ENCODE measurements at regions of chr10 and their contacts with region 1.

Region 1: DNA sequence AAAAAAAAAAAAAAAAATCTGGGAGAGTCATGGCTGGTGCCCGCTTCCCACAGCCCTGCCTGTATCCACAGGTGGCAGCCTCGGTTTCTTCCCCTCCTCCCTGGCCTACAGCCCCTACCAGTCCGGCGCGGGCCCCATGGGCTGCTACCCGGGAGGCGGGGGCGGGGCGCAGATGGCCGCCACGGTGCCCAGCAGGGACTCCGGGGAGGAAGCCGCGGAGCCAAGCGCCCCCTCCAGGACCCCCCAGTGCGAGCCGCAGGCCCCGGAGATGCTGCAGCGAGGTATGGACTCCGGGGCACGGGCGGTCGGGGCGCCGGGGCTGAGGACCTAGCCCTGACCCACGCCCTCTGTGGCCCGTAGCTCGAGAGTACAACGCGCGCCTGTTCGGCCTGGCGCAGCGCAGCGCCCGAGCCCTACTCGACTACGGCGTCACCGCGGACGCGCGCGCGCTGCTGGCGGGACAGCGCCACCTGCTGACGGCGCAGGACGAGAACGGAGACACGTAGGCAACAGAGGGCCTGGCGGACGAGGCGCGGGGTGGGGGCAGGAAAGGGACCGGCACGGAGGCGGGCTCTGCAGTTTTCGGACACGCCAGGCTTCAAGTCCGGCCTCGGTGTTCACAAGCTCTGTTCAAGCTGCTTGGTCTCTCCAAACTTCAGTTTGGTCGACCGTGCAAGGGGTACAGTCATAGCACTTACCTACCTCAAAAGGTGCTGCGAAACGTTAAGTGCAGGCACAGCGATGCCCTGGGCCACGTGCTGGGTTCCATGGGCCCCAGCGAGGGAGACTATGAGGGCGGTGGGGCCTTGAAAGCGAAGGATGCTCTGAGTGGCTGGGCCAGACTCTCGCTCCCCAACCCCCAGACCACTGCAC is 3.9 kb downstream of the NFKB2 start:
- DNase-seq: no peak
- H3K4me3 ChIP-seq: peak overlapping the region; percentile 59
- CTCF ChIP-seq: peak; percentile 97

Region 2: GRCh38 chr10:102175415-102175814 is 224.0 kb before region 1 on chr10:
- CTCF ChIA-PET with region 1: interaction called, 92 read pairs
- POLR2A ChIA-PET with region 1: no interaction called
- DNase-seq: peak; percentile 47
- H3K4me3 ChIP-seq: no peak overlapping the region
- CTCF ChIP-seq: no peak

Region 3: DNA sequence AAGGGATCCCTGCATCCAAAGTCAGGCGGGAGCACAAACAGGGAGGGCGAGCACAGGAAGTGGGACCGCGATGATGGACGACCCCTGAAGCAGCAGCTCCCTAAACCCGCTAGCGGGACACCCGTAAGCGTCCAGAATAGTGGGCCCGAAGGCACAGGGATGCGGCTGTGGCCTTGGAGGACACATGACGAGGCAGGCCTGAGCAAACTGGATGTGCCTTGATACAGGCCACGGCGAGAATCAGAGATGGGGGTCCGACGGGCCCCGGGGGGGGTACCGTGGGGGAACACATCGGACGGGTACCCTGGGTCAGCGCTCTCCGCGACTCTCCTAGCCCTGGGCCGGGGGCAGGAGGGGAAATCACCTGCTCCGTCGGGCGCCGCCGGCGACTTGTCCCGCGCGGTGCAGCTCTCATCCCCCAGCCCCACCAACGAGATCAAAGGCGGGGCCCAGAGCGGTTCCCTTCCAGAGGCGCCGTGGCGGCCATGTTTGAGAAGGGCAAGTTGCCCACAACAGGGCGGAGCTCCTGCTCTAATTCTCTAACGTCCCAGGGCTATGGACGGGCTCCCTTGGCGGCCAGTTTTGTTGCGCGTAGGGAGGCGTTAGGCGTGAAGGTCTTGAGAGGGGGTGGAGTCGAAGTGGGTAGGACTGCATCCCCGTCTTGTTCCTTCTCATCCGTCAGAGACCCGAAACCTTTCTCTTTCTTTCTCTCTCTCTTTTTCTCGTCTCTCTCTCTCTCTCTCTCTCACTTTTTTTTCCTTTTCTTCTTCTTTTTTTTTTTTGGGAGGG is 32.9 kb after region 1 on chr10 and contains the start of gene CUEDC2:
- CTCF ChIA-PET with region 1: interaction called, 157 read pairs
- POLR2A ChIA-PET with region 1: interaction called, 4 read pairs
- DNase-seq: peak; percentile 61
- H3K4me3 ChIP-seq: peak within 1 kb of the TSS; percentile 90
- CTCF ChIP-seq: no peak

Region 4: DNA sequence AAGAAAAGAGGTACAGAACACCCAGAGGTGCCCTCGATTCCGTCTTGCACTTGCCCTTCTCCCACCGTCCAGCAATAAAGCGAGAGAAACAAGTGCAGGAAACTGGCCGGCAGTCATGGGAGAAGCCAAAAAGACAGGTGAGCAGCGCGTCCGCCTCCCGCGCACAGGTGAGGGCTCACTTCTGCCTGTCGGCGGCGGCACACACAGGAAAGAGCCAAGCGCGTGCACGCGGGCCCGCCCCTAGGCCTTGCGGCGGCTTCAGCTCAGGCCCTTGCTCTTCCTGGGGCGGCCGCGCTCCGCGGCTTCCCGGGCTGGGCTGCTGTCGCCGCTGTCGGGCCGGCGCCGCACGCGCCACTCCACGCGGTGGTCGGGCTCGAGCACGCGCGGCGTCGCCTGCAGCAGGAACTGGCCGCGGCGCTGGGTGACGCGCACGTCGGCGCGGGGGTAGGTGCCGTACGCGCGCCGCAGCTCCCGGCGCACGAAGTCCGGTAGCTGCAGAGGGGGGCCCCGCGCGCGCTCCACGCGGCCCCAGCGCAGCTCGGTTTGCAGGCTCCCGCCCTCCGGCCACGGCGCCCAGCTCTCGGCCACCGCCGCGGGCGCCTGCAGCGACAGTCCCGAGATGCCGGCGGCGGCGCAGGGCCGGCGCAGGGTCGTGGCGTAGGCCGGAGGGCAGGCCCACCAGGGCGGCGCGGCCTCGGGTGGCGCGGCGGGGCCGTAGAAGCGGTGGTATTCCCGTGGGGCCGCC is 50.9 kb after region 1 on chr10:
- CTCF ChIA-PET with region 1: interaction called, 32 read pairs
- POLR2A ChIA-PET with region 1: no interaction called
- DNase-seq: no peak
- H3K4me3 ChIP-seq: peak overlapping the region; percentile 70
- CTCF ChIP-seq: no peak

Region 5: GRCh38 chr10:102962951-102963755 is 563.7 kb after region 1 on chr10:
- CTCF ChIA-PET with region 1: no interaction called
- POLR2A ChIA-PET with region 1: no interaction called
- DNase-seq: no peak
- H3K4me3 ChIP-seq: no peak overlapping the region
- CTCF ChIP-seq: no peak

Measured in AG04449 (cell line).